Psoas muscle (tissue), 8 donors: ENCODE measurements at regions of chr14 and their contacts with region 1.

Region 1: GRCh38 chr14:77097700-77098528 is at the start of gene CIPC:
- DNase-seq: peak; percentile 99 to 100
- ATAC-seq: peak; percentile 90 to 95 (median 90)
- H3K4me3 ChIP-seq: peak within 1 kb of the TSS; percentile 66
- H3K27ac ChIP-seq: peak within 1 kb of the TSS; percentile 98
- H3K4me1 ChIP-seq: peaks cover 39% of the 10 kb centered on the region
- H3K27me3 ChIP-seq: no peaks in the 10 kb centered on the region
- CTCF ChIP-seq: no peak
- total RNA-seq, gene CIPC: 83.8 to 133 (median 112) TPM

Region 2: GRCh38 chr14:75258615-75259466 is 1839.1 kb before region 1 on chr14:
- intact Hi-C with region 1: loop called in 1 of 2 experiments (anchors 5 kb)
- DNase-seq: peak; percentile 98 to 99
- ATAC-seq: peak; percentile 87 to 95 (median 88)
- H3K4me3 ChIP-seq: peak overlapping the region; percentile 61
- H3K27ac ChIP-seq: peak overlapping the region; percentile 95
- H3K4me1 ChIP-seq: peaks cover 33% of the 10 kb centered on the region
- H3K27me3 ChIP-seq: no peaks in the 10 kb centered on the region
- CTCF ChIP-seq: no peak

Region 3: GRCh38 chr14:77053046-77053841 is 44.7 kb before region 1 on chr14:
- intact Hi-C with region 1: no loop called
- DNase-seq: peak; percentile 76 to 81
- ATAC-seq: peak; percentile 22 to 59 (median 23)
- H3K4me3 ChIP-seq: no peak overlapping the region
- H3K27ac ChIP-seq: peak overlapping the region; percentile 67
- H3K4me1 ChIP-seq: peaks cover 5% of the 10 kb centered on the region
- H3K27me3 ChIP-seq: no peaks in the 10 kb centered on the region
- CTCF ChIP-seq: peak; percentile 74